Mammary epithelial cell (primary cell): ENCODE measurements at regions of chr14 and their contacts with region 1.

Region 1: GRCh38 chr14:100417466-100417865 is 94.3 kb downstream of the SLC25A47 start:
- DNase-seq: peak; percentile 84
- H3K4me3 ChIP-seq: no peak overlapping the region
- H3K27ac ChIP-seq: peak overlapping the region; percentile 60
- H3K4me1 ChIP-seq: peaks cover 16% of the 10 kb centered on the region
- H3K27me3 ChIP-seq: no peaks in the 10 kb centered on the region
- CTCF ChIP-seq: peak; percentile 88 to 89

Region 2: GRCh38 chr14:100321473-100322137 is 95.9 kb before region 1 on chr14:
- CTCF ChIA-PET with region 1: no interaction called
- dilution Hi-C with region 1: loop called (anchors 5 kb)
- in situ Hi-C with region 1: no loop called
- intact Hi-C with region 1: no loop called
- DNase-seq: no peak
- H3K4me3 ChIP-seq: no peak overlapping the region
- H3K27ac ChIP-seq: no peak overlapping the region
- H3K4me1 ChIP-seq: peaks cover 10% of the 10 kb centered on the region
- H3K27me3 ChIP-seq: no peaks in the 10 kb centered on the region
- CTCF ChIP-seq: no peak

Region 3: GRCh38 chr14:100432652-100433427 is 15.4 kb after region 1 on chr14:
- CTCF ChIA-PET with region 1: no interaction called
- dilution Hi-C with region 1: no loop called
- in situ Hi-C with region 1: no loop called
- intact Hi-C with region 1: no loop called
- DNase-seq: no peak
- H3K4me3 ChIP-seq: no peak overlapping the region
- H3K27ac ChIP-seq: no peak overlapping the region
- H3K4me1 ChIP-seq: no peaks in the 10 kb centered on the region
- H3K27me3 ChIP-seq: no peaks in the 10 kb centered on the region
- CTCF ChIP-seq: no peak

Region 4: DNA sequence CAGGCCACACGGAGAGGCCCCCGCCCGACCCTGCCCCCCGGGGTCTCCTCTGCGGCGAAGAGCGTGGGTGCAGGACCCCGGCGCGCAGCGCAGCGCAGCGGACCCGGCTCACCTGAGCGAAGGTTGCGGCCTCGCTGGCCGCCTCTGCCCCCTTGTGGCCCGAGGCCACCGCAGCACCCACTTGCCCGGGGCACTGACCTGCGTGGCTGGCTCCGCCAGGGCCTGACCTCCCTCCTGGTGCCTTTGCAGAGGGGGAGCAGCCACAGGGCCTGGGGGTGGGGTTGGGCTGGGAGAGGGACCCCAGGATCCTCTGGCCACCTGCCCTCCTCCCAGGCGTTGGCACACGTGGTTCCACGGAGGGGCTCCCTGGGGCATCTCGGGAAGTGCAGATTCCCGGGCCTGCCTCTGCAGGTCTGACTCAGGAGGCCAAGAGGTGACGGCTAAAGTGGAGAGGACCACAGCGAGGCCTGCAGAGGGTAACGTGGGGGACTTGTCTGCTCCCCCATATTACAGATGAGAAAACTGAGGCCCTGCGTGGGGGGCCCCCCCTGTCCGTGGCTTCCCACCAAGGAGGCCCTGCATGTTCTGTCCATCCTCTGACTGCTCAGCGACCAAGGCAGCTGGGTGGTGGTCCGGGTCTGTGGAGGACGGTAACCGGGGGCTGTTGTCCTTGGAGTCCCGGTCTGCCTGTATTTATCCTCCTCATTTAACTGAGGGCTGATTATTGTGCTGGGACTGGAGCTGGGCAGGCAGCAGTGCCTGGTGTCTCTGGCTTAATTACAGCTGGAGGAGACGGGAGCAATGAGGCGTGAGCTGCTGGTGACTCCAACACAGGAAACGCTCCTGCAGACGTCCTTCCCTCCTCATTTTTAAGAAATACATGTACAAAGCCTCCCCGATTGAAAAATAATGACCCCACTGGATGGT is 237.6 kb after region 1 on chr14:
- CTCF ChIA-PET with region 1: no interaction called
- dilution Hi-C with region 1: no loop called
- in situ Hi-C with region 1: no loop called
- intact Hi-C with region 1: loop called (anchors 1 kb)
- DNase-seq: peak; percentile 12
- H3K4me3 ChIP-seq: no peak overlapping the region
- H3K27ac ChIP-seq: no peak overlapping the region
- H3K4me1 ChIP-seq: peaks cover 5% of the 10 kb centered on the region
- H3K27me3 ChIP-seq: no peaks in the 10 kb centered on the region
- CTCF ChIP-seq: peak; percentile 47 to 86

Region 5: GRCh38 chr14:101072945-101073597 is 655.6 kb after region 1 on chr14:
- CTCF ChIA-PET with region 1: no interaction called
- dilution Hi-C with region 1: no loop called
- in situ Hi-C with region 1: no loop called
- intact Hi-C with region 1: loop called (anchors 10 kb)
- DNase-seq: peak; percentile 95
- H3K4me3 ChIP-seq: no peak overlapping the region
- H3K27ac ChIP-seq: peak overlapping the region; percentile 34
- H3K4me1 ChIP-seq: peaks cover 12% of the 10 kb centered on the region
- H3K27me3 ChIP-seq: peaks cover 4% of the 10 kb centered on the region
- CTCF ChIP-seq: peak in 1 of 2 donors; percentile 33